ENCODE measurements at regions of chr5 and their contacts with region 1.

Region 1: DNA sequence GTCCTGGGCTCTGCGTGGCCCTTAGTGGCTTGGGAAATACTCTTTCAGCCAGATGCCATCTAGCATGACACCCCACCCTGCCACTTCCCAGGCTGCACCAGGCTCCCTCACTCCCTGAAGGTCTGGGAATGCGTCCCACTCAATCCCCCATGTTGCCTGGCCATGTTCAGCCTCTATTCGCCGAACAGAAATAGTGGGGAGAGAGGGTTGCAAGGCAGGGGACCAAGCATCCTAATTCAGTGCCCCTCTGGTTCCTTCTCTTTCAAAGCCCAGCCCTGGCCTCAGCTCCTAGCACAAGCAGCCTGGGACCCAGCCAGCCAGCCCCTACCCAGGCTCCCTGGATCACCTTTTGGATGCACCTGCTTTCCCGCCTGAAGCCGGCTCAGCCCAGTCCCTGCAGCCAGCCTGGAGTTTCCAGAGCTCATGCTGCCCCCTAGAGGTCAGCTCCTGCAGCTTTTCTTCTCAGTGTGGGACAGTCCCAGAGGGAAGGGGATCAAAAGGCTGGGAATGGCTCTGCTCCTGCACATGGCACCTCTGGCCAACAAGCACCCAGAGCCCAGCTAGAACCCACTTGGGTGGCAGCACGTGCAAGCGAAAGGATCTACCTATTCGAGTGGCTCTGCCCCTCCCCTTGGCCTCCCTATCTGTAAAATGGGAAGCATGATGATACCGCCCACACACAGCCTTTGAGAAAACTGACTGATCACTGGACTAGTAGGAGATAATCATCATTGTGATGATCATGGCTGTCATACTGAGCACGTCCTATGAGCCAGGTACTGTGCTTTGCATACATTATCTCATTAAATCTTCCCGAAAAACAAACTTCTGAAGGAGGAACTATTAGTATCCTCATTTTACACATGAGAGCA is 48.7 kb upstream of the C5orf58 start:
- DNase-seq: peak; percentile 85
- H3K4me3 Mint-ChIP-seq: no peak overlapping the region
- H3K27ac Mint-ChIP-seq: no peak overlapping the region
- H3K4me1 Mint-ChIP-seq: no peaks in the 10 kb centered on the region
- H3K27me3 Mint-ChIP-seq: no peaks in the 10 kb centered on the region
- CTCF ChIP-seq: peak; percentile 89

Region 2: GRCh38 chr5:169701910-169702451 is 482.1 kb before region 1 on chr5:
- CTCF ChIA-PET with region 1: interaction called, 22 read pairs
- POLR2A ChIA-PET with region 1: no interaction called
- intact Hi-C with region 1: loop called (anchors 1 kb)
- DNase-seq: peak; percentile 56
- H3K4me3 Mint-ChIP-seq: no peak overlapping the region
- H3K27ac Mint-ChIP-seq: no peak overlapping the region
- H3K4me1 Mint-ChIP-seq: peaks cover 33% of the 10 kb centered on the region
- H3K27me3 Mint-ChIP-seq: no peaks in the 10 kb centered on the region
- CTCF ChIP-seq: peak; percentile 82

Region 3: DNA sequence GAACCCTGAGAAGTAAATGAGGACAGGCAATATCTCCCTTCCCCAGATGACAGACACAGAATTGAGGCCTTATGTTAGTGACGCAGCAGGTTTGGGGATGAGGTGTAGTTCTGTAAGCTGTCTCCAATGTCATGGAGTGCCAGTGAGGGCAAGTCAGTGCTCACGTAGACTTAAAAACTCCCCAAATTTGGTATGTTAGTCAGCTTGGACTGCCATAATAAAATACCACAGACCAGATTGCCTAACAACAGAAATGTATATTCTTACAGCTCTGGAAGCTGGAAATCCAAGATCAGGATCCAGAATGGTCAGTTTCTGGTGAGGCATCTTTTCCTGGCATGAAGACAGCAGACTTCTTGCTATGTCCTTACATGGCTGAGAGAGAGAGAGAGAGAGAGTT is 63.5 kb before region 1 on chr5:
- CTCF ChIA-PET with region 1: interaction called, 26 read pairs
- POLR2A ChIA-PET with region 1: interaction called, 3 read pairs
- intact Hi-C with region 1: no loop called
- DNase-seq: peak; percentile 35
- H3K4me3 Mint-ChIP-seq: no peak overlapping the region
- H3K27ac Mint-ChIP-seq: no peak overlapping the region
- H3K4me1 Mint-ChIP-seq: no peaks in the 10 kb centered on the region
- H3K27me3 Mint-ChIP-seq: no peaks in the 10 kb centered on the region
- CTCF ChIP-seq: no peak

Region 4: GRCh38 chr5:170161069-170161468 is 23.0 kb before region 1 on chr5:
- CTCF ChIA-PET with region 1: interaction called, 97 read pairs
- POLR2A ChIA-PET with region 1: no interaction called
- intact Hi-C with region 1: no loop called
- DNase-seq: no peak
- H3K4me3 Mint-ChIP-seq: no peak overlapping the region
- H3K27ac Mint-ChIP-seq: no peak overlapping the region
- H3K4me1 Mint-ChIP-seq: peaks cover 6% of the 10 kb centered on the region
- H3K27me3 Mint-ChIP-seq: no peaks in the 10 kb centered on the region
- CTCF ChIP-seq: no peak

Region 5: DNA sequence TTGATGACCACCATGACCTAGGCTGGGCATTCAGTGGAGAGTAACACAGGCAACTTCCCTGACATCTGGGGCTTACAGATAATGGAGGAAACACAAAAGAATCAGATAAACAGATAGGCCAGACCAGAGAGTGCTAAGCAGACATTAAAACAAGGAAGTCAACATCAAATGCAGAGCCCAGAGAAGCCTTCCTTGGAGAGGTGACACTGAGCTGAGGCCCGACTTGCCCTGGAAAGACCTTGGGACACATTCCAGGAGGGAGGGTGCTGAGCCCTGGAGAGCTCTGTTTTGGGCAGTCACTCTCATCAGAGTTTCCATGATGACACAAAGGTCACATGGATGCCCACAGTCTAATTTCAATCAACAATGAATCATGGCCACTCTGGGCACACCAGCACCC is 16.8 kb after region 1 on chr5:
- CTCF ChIA-PET with region 1: interaction called, 105 read pairs
- POLR2A ChIA-PET with region 1: interaction called, 3 read pairs
- intact Hi-C with region 1: no loop called
- DNase-seq: no peak
- H3K4me3 Mint-ChIP-seq: no peak overlapping the region
- H3K27ac Mint-ChIP-seq: no peak overlapping the region
- H3K4me1 Mint-ChIP-seq: no peaks in the 10 kb centered on the region
- H3K27me3 Mint-ChIP-seq: peaks cover 26% of the 10 kb centered on the region
- CTCF ChIP-seq: no peak

Region 6: GRCh38 chr5:170235876-170236864 is 52.1 kb after region 1 on chr5:
- CTCF ChIA-PET with region 1: no interaction called
- POLR2A ChIA-PET with region 1: no interaction called
- intact Hi-C with region 1: no loop called
- DNase-seq: no peak
- H3K4me3 Mint-ChIP-seq: no peak overlapping the region
- H3K27ac Mint-ChIP-seq: no peak overlapping the region
- H3K4me1 Mint-ChIP-seq: no peaks in the 10 kb centered on the region
- H3K27me3 Mint-ChIP-seq: peaks cover 22% of the 10 kb centered on the region
- CTCF ChIP-seq: no peak

Region 7: GRCh38 chr5:170360709-170361108 is 176.7 kb after region 1 on chr5:
- CTCF ChIA-PET with region 1: no interaction called
- POLR2A ChIA-PET with region 1: no interaction called
- intact Hi-C with region 1: no loop called
- DNase-seq: no peak
- H3K4me3 Mint-ChIP-seq: no peak overlapping the region
- H3K27ac Mint-ChIP-seq: no peak overlapping the region
- H3K4me1 Mint-ChIP-seq: no peaks in the 10 kb centered on the region
- H3K27me3 Mint-ChIP-seq: no peaks in the 10 kb centered on the region
- CTCF ChIP-seq: no peak